ENCODE measurements at regions of chr4 and their contacts with region 1.

Region 1: GRCh38 chr4:105520817-105521790 is 31.3 kb upstream of the ARHGEF38 start:
- DNase-seq: peak; percentile 59 to 76 (median 73)
- H3K4me3 ChIP-seq: no peak overlapping the region
- H3K27ac ChIP-seq: no peak overlapping the region
- H3K4me1 ChIP-seq: no peaks in the 10 kb centered on the region
- H3K27me3 ChIP-seq: no peaks in the 10 kb centered on the region

Region 2: DNA sequence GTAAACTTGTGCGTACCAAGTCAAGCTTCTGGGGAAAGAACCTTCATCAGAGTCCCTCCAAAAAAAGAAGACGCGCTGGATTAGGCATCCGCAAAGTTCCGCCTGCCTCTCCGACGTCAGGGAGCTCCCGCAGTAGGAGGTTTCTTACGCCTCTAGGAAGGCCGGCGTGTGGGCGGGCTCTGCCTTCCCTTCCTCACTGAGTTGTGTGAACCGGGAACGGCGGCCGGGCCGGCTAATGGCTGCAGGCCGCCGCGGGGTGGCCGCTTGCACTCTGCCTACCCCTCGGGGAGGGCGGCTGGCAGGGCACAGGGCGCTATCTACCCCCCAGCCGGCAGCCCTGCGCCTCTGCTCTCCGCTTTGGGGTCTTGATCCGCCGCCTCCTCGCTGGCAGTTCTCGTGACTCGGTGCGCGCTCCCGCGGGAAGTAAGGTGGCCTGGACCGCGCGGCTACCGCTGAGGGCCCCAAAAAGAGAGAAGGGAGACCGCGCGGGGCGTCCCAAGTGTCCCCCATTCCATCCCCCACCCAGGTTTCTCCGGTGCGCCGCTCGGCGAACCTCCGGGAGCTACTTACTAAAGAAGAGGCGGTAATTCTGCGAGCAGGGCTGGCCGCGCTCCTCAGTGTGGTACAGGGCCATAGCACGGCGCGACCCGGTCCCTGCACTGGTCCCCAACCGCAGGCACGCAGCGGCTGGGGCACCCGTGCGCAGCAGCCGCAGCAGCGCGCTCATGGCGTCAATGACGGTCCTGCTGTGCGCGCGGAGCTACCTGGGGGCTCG is 47.6 kb before region 1 on chr4 and contains the start of gene PPA2:
- CTCF ChIA-PET with region 1: interaction called, 10 read pairs
- POLR2A ChIA-PET with region 1: no interaction called
- DNase-seq: peak; percentile 84 to 96 (median 94)
- H3K4me3 ChIP-seq: peak within 1 kb of the TSS; percentile 63 to 95 (median 88)
- H3K27ac ChIP-seq: peak within 1 kb of the TSS; percentile 94 to 96
- H3K4me1 ChIP-seq: peaks cover 16 to 29% (median 21%) of the 10 kb centered on the region in 4 experiments
- H3K27me3 ChIP-seq: no peaks in the 10 kb centered on the region

Region 3: DNA sequence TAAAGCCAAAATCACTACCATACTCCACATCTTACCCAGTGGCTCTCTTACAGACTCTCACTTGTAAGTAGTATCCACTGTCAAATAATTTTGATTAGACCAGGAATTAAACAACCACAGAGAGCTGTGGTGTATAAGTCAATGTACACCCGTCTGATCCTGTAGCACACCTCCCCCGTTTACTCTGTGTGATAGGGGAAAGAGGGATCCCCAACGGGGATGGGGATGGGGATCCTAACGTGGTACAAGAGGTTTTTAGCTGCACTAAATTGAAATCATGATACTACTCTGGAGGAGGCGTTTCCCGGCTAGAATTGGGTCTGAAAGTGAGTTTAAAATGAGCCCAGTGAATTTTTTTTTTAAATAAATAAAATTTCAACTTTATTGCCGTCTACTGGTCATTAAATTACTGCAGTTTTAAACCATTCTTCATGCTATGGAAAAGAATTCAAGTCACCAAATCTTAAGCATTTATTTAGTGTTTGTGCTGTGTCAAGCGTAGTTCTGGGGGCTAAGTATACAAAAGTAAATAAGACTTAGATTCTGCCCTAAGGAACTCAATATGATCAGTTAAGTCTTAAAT is 110.8 kb after region 1 on chr4:
- CTCF ChIA-PET with region 1: interaction called, 17 read pairs
- POLR2A ChIA-PET with region 1: no interaction called
- DNase-seq: peak in 2 of 3 donors; percentile 12 to 29
- H3K4me3 ChIP-seq: no peak overlapping the region
- H3K27ac ChIP-seq: no peak overlapping the region
- H3K4me1 ChIP-seq: no peaks in the 10 kb centered on the region
- H3K27me3 ChIP-seq: no peaks in the 10 kb centered on the region

Region 4: GRCh38 chr4:105666693-105667092 is 145.6 kb after region 1 on chr4:
- CTCF ChIA-PET with region 1: interaction called, 45 read pairs
- POLR2A ChIA-PET with region 1: no interaction called
- DNase-seq: peak; percentile 33 to 66 (median 52)
- H3K4me3 ChIP-seq: no peak overlapping the region
- H3K27ac ChIP-seq: no peak overlapping the region
- H3K4me1 ChIP-seq: no peaks in the 10 kb centered on the region
- H3K27me3 ChIP-seq: no peaks in the 10 kb centered on the region

Region 5: DNA sequence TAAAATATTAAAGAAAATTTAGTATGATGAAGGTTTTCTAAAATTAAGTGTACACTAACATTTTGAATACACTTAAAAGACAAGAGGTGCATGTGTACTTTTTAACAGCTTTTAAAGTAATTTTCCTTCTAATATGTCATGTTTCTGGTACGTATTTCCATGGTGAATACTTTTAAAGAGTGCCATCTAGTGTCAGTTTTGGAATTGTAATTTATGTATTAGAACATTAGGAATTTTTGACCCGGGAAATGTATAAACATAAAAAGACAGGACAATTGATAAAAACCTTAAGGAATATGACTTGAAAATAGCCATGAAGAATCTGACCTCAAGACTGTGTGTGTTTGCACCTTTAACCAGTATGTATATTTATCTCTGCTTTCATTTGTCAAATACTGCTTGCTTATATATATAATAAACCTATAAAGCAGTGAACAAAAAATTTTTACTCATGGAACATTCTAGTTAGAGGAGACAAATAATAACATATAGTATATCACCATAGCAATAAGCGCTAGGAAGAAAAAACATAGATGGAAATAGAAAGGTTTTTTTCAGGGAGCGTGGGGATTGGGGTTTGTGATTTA is 194.7 kb after region 1 on chr4:
- CTCF ChIA-PET with region 1: interaction called, 13 read pairs
- POLR2A ChIA-PET with region 1: no interaction called
- DNase-seq: peak; percentile 39 to 41 (median 39)
- H3K4me3 ChIP-seq: peak overlapping the region in 1 of 7 experiments; percentile 48
- H3K27ac ChIP-seq: no peak overlapping the region
- H3K4me1 ChIP-seq: peaks cover 0 to 13% (median 9%) of the 10 kb centered on the region in 4 experiments
- H3K27me3 ChIP-seq: no peaks in the 10 kb centered on the region